BJ (cell line): ENCODE measurements at regions of chr13 and their contacts with region 1.

Region 1: DNA sequence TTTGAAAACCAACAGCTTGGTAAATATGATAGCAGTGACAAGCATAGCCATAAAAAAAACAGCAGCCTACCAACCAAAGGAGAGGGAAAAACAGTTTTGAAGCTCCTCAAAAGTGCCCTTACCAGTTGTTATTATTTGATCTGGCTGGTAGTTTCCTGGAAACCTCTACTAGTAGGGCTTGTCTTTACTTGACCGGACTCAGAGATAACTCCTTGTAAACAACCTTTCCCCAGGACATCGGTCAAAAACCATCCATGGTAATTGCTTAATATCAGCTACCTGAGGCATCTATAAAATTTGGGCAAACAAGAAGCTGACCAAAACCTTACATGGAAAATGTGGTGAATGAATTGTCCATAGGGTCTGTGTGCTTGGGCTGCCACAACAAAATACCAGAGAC is 210.9 kb downstream of the FGF14 start:
- DNase-seq: no peak
- H3K4me3 ChIP-seq: no peak overlapping the region
- H3K27me3 ChIP-seq: no peaks in the 10 kb centered on the region
- CTCF ChIP-seq: no peak

Region 2: GRCh38 chr13:102260247-102260646 is 69.3 kb after region 1 on chr13:
- CTCF ChIA-PET with region 1: no interaction called
- POLR2A ChIA-PET with region 1: no interaction called
- DNase-seq: no peak
- H3K4me3 ChIP-seq: no peak overlapping the region
- H3K27me3 ChIP-seq: peaks cover 1% of the 10 kb centered on the region; the same call in 1 of the 2 replicates
- CTCF ChIP-seq: no peak

Region 3: DNA sequence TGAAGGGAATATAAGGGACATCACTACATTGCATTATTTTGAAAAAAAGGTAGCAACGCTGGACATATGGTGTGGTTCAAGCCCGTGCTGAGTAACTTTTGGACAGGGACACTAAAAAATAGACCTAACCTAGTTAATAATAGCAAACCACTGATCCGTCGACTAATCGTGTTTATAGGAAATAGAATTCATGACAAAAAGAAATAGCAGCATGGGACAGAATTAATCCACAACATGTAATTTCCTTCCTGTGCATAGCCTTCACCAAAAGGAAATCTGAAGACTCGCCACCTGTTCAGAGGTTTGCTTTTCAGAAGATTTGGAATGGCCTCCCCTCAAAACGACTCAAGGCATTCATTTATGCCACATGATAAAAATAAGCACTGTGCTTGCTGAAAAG is 82.2 kb after region 1 on chr13:
- CTCF ChIA-PET with region 1: no interaction called
- POLR2A ChIA-PET with region 1: no interaction called
- DNase-seq: no peak
- H3K4me3 ChIP-seq: no peak overlapping the region
- H3K27me3 ChIP-seq: no peaks in the 10 kb centered on the region
- CTCF ChIP-seq: no peak

Region 4: GRCh38 chr13:102347490-102347889 is 156.6 kb after region 1 on chr13:
- CTCF ChIA-PET with region 1: no interaction called
- POLR2A ChIA-PET with region 1: interaction called, 13 read pairs
- DNase-seq: no peak
- H3K4me3 ChIP-seq: no peak overlapping the region
- H3K27me3 ChIP-seq: no peaks in the 10 kb centered on the region
- CTCF ChIP-seq: no peak

Region 5: DNA sequence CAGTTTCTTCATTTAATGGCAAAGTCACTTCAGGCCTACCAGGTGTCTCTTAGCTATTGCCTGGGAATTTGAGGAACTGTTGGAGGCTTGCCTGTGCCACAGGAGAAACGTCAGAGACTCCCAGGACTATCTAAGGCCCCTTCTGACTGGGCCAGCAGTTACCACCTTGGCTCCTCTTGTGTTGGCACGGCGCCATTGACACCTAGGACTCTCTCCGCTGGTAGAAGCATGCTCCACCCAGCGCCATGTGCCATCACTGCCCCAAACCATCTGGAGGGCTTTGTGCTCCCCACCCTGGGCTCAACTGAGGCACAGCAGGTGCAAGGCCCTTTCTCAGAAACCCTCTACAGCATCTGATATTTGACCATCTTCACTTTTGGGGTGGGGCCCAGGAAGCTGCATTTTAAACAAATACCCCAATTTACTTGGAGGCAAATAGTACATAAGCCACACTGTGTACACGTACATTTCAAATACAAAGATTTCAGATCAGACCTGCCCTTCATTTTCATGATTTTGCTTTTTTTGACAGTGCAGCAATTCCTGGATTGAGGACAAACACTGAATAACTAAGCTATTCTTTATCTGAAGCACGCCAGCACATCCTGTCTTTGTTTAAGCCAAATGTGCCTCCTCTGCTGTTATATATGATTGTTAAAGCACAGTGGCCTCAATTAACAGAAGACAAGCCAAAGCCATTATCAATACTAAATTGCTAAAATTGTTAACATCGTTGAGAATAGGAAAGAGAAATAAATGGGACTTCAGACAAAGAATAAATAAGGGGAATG is 346.0 kb after region 1 on chr13:
- CTCF ChIA-PET with region 1: no interaction called
- POLR2A ChIA-PET with region 1: no interaction called
- DNase-seq: no peak
- H3K4me3 ChIP-seq: no peak overlapping the region
- H3K27me3 ChIP-seq: no peaks in the 10 kb centered on the region
- CTCF ChIP-seq: no peak